GM18951 (cell line): ENCODE measurements at regions of chr17 and their contacts with region 1.

Region 1: DNA sequence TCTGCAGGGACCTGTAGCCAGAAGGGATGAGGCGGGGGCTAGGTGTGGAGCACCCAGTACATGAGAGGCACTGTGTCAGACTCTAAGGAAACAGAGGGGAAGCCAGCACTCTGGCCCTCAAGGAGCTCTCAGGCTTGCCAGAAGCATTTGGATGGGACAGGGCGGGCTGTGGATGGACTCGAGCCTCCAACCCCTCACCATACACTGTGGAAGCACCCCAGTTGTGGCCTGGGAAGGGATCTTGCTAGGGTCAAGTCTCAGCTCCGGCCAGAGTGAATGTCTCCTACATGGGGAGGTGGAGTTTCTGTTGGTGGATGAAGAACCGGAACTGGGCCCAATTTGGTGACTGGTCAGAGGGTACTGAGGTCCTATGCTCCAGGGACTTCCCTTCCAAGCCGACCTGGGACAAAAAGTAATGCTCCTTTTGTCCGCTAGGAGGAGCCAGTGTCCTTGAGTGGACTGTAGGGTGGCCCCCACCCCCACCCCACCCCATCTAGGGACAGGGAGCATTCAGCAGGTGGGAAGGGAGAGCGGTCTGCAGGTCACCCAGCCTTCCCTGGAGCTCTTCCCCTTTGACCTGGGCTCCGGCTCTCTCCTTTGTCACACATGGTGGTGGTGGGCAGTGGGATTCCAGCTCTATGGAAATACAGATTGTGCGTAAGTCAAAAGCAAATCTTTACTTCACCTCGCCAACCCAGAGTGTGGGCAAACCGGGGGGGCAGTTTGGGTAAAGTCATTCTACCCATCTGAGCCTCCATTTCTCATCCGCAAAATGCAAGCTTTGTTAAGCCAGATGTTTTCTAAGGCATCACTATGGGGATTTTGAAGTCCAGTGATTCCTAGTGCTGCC is 20.4 kb upstream of the PHB1 start:
- POLR2A ChIP-seq: no peak

Region 2: DNA sequence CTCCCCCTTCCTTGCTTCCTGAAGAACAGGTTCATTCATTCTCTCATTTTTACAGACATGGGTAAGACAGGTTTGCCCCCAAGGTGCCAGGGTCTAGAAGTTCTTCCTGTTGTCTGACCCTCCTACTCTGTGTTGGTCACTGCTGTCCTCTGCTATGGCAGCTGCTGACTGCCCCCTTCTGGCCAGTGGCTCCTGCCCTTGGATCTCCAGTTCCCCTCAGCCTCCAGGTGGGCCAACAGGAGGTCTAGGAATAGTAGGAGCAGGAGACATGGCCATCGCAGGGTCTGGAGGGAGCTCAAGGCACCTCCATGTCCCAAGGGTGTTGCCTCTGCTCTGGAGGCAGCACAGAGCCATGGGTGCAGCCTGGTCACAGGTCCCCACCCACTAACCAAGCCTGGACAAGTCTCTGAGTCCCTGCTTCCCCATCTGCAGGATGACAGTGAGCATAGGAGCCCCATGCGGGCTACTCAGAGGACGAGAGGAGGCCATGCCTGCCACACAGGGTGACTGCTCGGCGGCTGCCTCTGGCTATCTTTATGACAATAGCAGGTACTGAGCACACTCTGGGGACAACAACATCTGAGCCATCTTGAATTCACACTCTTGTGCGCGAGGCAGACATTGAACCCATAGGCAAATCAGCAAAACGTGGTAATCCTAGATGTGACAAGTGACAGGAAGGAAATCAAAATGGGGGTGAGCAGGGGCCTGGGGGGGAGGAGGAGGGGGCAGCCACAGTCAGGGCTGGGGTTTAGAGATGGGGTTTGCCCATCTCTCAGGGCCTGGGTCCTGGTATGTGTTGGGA is 113.7 kb after region 1 on chr17:
- in situ Hi-C with region 1: loop called (anchors 10 kb)
- POLR2A ChIP-seq: no peak